ENCODE measurements at regions of chr20 and their contacts with region 1.

Region 1: DNA sequence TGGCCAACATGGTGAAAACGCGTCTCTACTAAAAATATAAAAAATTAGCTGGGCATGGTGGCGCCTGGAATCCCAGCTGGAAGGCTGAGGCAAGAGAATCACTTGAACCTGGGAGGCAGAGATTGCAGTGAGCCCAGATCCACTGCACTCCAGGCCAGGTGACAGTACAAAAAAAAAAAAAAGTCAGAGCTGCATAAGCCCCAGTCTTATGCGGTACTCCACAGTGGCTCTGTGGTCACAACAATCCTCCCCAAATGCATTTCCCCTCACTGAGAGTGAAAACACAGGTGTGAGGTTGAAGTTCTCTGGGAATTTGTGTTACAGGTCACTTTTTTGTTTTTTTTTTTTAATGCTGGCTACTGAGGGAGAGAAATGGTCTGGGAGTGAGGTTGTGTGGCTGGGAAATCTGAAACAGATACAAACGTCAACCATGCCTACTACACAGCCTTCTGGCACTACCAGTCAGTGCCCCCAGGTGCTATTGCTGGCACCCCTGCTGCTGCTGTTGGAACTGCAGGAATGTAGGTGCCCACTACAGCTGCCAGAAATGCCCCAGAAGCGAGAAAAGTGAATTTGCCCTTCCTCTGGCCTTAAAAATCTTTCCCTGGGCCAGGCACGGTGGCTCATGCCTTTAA is 5.7 kb downstream of the MRPS26 start:
- DNase-seq: no peak
- H3K4me3 ChIP-seq: no peak overlapping the region
- H3K27ac ChIP-seq: no peak overlapping the region
- H3K4me1 ChIP-seq: peaks cover 18% of the 10 kb centered on the region
- H3K27me3 ChIP-seq: no peaks in the 10 kb centered on the region
- CTCF ChIP-seq: no peak
- POLR2A ChIP-seq: no peak

Region 2: GRCh38 chr20:3115190-3116107 is 63.9 kb after region 1 on chr20:
- intact Hi-C with region 1: loop called (anchors 10 kb)
- DNase-seq: no peak
- H3K4me3 ChIP-seq: no peak overlapping the region
- H3K27ac ChIP-seq: no peak overlapping the region
- H3K4me1 ChIP-seq: no peaks in the 10 kb centered on the region
- H3K27me3 ChIP-seq: no peaks in the 10 kb centered on the region
- CTCF ChIP-seq: peak; percentile 19 to 70 (median 37)
- POLR2A ChIP-seq: no peak